Caco-2 (cell line): ENCODE measurements at regions of chr17 and their contacts with region 1.

Region 1: GRCh38 chr17:59786536-59787319 is 79.3 kb downstream of the VMP1 start:
- DNase-seq: peak; percentile 91 to 93
- H3K4me3 ChIP-seq: peak overlapping the region; percentile 1; the same call in 1 of the 2 replicates
- H3K4me3 Mint-ChIP-seq: peak overlapping the region; percentile 46
- H3K27ac Mint-ChIP-seq: peak overlapping the region; percentile 76
- H3K4me1 ChIP-seq: peaks cover 70% of the 10 kb centered on the region
- H3K4me1 Mint-ChIP-seq: peaks cover 32% of the 10 kb centered on the region
- H3K27me3 ChIP-seq: no peaks in the 10 kb centered on the region
- H3K27me3 Mint-ChIP-seq: no peaks in the 10 kb centered on the region
- CTCF ChIP-seq: no peak

Region 2: DNA sequence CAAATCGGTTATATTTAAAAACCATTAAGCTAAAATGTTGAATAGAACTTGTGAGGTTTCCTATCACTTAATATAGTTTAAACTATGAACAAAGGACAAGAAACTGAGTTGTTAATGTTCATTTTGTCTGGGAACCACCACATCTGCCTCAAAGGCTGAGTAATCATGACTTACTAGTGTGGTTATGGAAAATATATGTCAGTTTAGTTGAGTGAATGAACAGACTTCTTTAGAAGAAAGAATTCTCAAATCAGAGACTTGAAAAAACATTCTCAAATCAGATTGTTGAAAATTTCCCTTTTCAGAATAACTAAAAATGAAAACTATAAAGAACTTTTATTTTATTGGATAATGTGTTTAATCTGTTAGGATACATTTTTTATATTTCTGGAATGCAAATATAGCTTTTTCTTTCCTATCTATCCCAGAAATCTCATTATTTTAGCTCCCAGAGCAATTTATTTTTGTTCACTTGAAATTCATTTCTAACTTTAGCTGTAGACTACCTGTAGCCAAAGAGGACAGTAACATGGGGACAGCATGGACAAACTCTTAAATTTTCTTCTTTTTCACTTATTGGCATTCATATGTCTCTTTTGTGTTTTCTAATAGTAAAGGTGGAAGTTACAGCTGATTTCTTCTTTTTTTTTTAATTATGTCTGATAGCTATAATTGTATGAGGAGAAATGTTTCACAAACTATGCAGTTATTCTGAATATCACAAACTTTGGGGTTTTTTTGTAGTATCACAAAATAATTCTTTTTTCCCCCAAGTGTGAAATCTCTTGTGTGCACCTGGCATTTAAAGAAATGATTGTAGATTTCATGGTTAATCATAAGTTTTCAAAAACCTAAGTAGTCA is 24.0 kb before region 1 on chr17:
- CTCF ChIA-PET with region 1: no interaction called
- POLR2A ChIA-PET with region 1: no interaction called
- intact Hi-C with region 1: loop called (anchors 1 kb)
- DNase-seq: no peak
- H3K4me3 ChIP-seq: no peak overlapping the region
- H3K4me3 Mint-ChIP-seq: no peak overlapping the region
- H3K27ac Mint-ChIP-seq: peak overlapping the region; percentile 86
- H3K4me1 ChIP-seq: peaks cover 33% of the 10 kb centered on the region
- H3K4me1 Mint-ChIP-seq: peaks cover 18% of the 10 kb centered on the region
- H3K27me3 ChIP-seq: no peaks in the 10 kb centered on the region
- H3K27me3 Mint-ChIP-seq: no peaks in the 10 kb centered on the region
- CTCF ChIP-seq: no peak

Region 3: DNA sequence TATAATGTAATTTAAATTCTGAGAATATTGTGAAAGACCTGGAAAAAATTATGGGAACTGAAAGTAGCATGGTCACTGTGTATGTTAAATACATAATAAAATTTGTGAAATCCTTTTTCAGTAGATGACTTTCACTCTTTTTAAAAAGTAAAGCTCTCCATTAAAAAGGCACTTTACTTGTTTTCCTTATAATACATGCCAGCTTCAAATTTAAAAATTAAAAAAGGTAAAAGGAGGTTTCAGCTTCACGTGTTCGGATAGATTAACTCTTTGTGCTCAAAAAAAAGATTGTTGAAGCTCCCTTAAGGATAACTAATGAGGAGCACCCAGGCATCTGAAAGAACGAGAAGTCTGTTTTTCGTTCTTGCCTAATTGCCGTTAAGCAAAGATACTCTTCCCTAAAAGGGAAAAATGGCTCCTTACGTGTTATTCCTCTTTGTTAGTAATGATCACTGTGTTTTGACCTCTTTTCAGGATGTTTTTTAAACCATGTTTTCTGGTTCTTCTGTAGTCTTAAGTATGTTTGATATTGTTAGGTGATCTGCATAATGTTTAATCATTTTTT is 18.3 kb after region 1 on chr17:
- CTCF ChIA-PET with region 1: no interaction called
- POLR2A ChIA-PET with region 1: interaction called, 6 read pairs
- intact Hi-C with region 1: loop called (anchors 1 kb)
- DNase-seq: no peak
- H3K4me3 ChIP-seq: no peak overlapping the region
- H3K4me3 Mint-ChIP-seq: no peak overlapping the region
- H3K27ac Mint-ChIP-seq: no peak overlapping the region
- H3K4me1 ChIP-seq: peaks cover 19% of the 10 kb centered on the region; the same call in 1 of the 2 replicates
- H3K4me1 Mint-ChIP-seq: peaks cover 15% of the 10 kb centered on the region
- H3K27me3 ChIP-seq: no peaks in the 10 kb centered on the region
- H3K27me3 Mint-ChIP-seq: no peaks in the 10 kb centered on the region
- CTCF ChIP-seq: no peak

Region 4: GRCh38 chr17:59829217-59830006 is 42.7 kb after region 1 on chr17:
- CTCF ChIA-PET with region 1: interaction called, 5 read pairs
- POLR2A ChIA-PET with region 1: interaction called, 10 read pairs
- intact Hi-C with region 1: loop called (anchors 1 kb)
- DNase-seq: peak; percentile 83 to 85
- H3K4me3 ChIP-seq: no peak overlapping the region
- H3K4me3 Mint-ChIP-seq: peak overlapping the region; percentile 52
- H3K27ac Mint-ChIP-seq: peak overlapping the region; percentile 82
- H3K4me1 ChIP-seq: peaks cover 74% of the 10 kb centered on the region
- H3K4me1 Mint-ChIP-seq: peaks cover 36% of the 10 kb centered on the region
- H3K27me3 ChIP-seq: no peaks in the 10 kb centered on the region
- H3K27me3 Mint-ChIP-seq: no peaks in the 10 kb centered on the region
- CTCF ChIP-seq: no peak

Region 5: GRCh38 chr17:59837308-59838051 is 50.8 kb after region 1 on chr17:
- CTCF ChIA-PET with region 1: interaction called, 6 read pairs
- POLR2A ChIA-PET with region 1: interaction called, 37 read pairs
- intact Hi-C with region 1: loop called (anchors 1 kb)
- DNase-seq: peak; percentile 95 to 96
- H3K4me3 ChIP-seq: peak overlapping the region; percentile 49
- H3K4me3 Mint-ChIP-seq: peak overlapping the region; percentile 89
- H3K27ac Mint-ChIP-seq: peak overlapping the region; percentile 98
- H3K4me1 ChIP-seq: peaks cover 30% of the 10 kb centered on the region
- H3K4me1 Mint-ChIP-seq: peaks cover 41% of the 10 kb centered on the region
- H3K27me3 ChIP-seq: no peaks in the 10 kb centered on the region
- H3K27me3 Mint-ChIP-seq: peaks cover 2% of the 10 kb centered on the region
- CTCF ChIP-seq: no peak